ENCODE measurements at regions of chr1 and their contacts with region 1.

Region 1: DNA sequence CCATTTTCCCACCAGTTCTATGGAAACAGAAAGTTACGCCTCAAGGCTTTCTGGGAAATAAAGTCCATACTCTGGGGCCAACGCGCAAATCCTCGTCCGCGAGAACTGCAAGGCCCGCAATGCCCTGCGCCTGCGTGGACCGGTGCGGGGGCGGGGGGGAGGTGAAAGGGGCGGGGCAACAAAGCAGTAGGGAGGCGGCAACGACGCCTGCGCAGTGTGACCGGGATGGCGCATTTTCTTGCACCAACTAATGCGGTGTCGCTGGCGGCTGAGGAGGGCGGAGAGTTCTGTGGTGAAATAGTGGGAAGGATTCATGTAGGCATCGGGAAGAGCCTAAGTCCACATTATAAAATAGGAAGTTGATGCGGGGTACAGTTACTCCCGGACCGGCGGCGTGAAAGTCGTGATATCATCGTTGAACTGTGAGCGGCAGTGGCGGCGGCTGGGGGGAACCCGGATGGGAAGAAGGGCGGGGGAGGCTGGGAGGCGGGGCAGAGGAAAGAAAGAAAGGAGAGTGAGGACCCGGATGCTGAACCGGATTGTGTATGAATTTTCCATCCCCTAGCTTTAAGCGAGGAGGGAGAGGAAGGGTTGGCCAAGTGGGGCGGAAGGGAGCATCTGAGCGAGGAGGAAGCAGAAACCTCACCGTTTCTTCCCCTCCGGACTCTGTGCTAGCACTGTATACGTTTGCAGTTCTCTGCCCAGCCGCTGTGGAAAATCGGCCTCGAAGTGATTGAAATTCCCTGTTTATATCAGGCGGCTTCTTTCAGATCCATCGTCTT is at the start of gene GGPS1:
- DNase-seq: peak; percentile 95 to 99 (median 98)

Region 2: DNA sequence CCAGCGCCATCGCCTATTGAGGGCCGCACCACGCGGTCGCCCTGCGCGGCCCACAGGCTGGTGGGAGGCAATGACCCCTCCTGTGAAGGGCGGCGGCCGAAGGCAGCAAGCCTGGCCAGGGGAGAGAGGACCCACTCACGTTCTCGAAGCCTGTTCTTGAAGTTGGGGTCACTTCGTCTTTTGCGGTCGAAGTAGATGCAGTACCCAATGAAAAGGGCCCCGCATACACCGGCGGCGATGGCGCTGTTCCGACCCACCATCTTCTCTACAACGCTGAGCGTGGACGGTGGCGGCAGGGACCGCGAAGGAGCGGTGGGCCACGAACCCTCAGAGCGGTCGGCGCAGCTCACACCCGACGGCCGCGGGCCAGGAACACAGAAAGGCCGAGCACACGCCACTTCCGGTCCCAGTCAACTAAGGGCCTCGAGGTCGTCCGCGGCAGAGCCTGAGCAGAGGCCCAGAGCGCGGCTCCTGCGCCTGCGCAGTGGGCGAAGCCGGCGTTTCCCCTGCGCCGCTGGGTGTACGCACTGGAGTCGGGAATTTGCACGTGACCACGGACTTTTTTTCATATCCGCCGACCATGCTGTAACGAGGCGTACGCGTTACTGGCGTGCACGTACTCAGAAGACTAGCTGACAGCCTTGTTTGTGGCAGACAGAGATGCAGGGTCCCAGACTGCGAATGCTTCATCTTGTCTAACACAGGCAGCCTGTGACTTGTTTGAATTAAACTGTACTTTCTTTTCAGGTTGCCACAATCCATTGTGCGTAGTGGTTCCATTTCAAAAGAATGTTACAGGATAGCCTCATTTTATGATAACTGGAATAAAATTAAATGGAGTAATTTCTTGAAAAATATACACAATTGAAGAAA is 199.9 kb before region 1 on chr1 and contains the start of gene TOMM20:
- intact Hi-C with region 1: loop called (anchors 10 kb)
- DNase-seq: peak; percentile 92 to 99 (median 95)

Region 3: DNA sequence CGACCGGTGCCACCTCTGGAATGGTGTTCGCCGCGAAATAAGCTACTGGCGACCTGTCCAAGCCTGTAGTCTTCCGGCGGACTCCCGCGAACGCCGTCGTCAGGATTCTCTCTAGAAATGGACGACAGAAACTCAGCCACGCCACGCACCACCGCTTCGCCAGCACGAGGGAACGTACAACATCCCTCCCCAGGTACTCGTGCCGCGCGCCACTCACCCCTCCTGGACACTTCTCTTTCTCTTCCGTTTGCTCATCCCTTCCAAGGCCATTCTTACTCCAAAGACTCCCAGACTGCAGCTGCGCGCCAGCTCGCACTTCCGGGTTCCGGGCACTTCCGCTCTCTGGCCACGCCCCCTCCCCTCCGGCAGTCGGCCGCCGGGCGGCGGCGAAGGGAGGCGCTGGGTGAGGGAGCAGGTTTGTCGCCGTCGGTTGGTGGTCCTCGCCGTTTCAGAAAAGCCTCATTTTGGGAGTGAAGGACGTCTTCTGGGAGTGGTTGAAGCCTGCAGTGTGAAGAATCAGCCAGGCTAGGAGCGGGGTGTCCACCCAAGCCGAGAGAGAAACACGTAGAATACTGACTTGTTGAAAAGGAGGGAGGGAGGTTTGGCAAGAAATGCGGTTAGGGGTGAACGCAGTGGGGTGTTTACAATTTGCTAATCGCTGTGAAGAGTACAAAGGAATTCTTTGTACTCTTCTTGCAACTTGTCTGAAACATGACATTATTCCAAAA is 167.4 kb before region 1 on chr1 and contains the start of gene RBM34:
- intact Hi-C with region 1: loop called (anchors 2 kb)
- DNase-seq: peak; percentile 85 to 99 (median 91)

Region 4: DNA sequence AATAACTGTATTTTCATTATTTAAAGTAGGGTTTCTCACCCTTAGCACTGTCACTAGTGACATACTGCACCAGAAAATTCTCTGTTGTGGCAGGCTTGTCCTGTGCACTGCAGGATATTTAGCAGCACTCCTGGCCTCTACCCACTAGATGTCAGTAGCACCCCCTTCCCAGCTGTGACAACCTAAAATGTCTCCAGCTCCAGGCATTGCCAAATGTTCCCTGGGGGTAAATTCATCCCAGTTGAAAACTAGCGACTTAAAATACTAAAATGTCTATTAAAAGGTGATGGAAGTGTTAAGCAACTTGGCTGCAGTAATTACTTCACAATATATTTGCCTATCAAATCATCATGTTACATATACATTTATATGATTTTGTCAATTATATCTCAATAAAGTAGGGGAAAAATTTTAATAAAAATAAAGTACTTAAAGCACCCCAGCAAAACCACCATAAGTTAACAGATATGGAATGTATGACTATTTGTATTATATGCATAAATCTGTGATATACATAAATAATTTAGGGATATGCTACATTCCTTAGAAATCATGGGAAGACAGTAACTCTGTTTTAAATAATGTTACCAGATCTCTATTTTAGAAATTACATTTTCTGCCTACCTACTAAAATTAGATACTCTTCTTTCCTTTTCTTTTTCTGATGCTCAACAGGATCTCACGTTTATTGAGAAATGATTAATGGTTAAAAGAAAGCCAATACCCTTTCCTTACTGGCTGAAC is 75.2 kb before region 1 on chr1:
- intact Hi-C with region 1: loop called (anchors 2 kb)
- DNase-seq: peak in 7 of 10 donors; percentile 44 to 90 (median 57)

Region 5: DNA sequence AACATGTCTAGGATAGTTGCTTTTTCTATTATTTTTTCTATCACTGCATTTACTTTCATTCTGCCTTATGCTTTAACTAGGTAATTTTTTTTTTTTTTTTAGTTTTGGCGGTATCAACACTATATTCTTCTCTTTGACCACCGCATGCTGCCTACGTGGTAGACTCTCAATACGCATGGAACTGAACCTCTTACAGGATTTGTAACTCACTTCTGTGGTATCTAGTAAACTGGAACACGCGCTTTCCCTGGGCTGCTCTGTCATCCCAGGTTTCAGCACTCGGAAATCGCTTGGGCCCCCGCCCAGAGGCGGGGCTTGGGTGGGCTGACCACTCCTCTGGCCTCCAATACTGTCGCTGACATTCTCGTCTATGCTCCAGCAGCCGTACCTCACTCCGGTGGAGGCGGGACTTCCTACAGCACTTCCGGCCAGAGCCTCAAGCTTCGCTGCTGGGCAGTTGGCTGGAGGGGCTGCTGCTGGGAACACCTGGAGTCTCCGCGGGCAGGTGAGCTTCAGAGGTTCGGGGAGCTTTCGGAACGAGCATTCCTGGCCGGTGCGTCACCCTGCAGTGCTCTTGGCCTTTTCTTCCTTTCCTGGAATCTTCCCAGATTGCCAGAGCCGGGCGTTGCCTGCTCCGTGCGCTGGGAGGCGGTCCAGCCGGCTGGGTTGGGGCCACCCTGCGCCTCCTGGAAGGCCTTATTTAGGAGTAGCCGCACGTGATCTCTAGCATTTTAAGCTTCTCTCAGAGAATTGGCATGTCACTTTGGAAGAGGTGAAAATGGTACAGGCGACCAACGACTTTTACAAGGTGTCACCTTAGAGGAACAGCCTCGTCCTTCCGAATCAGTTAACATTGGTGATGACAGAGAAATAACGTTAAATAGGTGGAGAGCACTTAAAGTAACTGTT is 38.7 kb after region 1 on chr1 and contains the start of gene TBCE:
- intact Hi-C with region 1: loop called (anchors 2 kb)
- DNase-seq: peak; percentile 93 to 99 (median 97)

Region 6: GRCh38 chr1:235415008-235415904 is 86.7 kb after region 1 on chr1:
- intact Hi-C with region 1: loop called (anchors 2 kb)
- DNase-seq: peak in 7 of 10 donors; percentile 21 to 93 (median 55)

Region 7: DNA sequence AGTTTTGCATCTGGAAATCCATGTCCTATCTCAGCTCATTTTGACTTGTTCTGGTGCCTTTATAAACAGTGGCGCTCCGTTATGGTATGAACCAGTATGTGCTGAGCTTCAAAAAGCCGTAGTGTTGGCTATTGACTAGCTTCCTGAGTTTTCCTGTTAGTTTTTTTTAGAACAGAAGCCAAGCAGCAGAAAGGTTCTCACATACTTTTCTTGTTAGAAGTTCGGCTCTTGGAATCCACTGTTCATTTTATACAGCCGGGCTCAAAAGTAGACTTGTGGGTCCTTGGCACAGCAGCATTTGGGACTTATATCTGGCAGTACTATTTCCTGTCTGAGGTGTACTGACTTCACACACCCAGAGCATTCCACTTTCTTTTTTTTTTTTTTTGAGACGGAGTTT is 102.4 kb after region 1 on chr1:
- intact Hi-C with region 1: no loop called
- DNase-seq: no peak

Region 8: GRCh38 chr1:235504496-235505222 is 176.1 kb after region 1 on chr1:
- intact Hi-C with region 1: loop called (anchors 5 kb)
- DNase-seq: peak; percentile 97 to 100 (median 99)